MCF 10A (cell line): ENCODE measurements at regions of chr6 and their contacts with region 1.

Region 1: GRCh38 chr6:84707171-84707570 is 57.2 kb downstream of the TBX18 start:
- DNase-seq: no peak
- H3K4me3 Mint-ChIP-seq: no peak overlapping the region
- H3K27ac Mint-ChIP-seq: no peak overlapping the region
- H3K4me1 Mint-ChIP-seq: no peaks in the 10 kb centered on the region
- H3K27me3 Mint-ChIP-seq: no peaks in the 10 kb centered on the region
- CTCF ChIP-seq: no peak

Region 2: DNA sequence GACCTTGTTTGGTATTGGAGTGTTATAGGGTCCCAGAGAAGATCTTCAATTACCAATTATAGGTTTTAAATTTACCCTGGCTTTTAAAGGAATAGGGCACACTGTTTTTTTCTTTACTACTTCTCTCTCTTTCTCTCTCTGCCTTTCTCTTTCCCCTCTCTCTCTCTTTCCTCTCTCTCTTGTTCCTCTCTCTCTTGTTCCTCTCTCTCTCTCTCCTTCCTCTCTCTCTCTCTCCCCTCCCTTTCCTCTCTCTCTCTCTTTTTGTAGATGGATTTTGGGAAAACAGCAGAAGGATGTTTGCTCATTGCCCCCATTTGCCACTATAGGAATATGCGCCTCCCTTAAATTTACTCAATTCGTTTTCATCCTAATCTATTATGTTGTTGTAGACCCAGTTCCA is 12.0 kb after region 1 on chr6:
- CTCF ChIA-PET with region 1: no interaction called
- POLR2A ChIA-PET with region 1: no interaction called
- intact Hi-C with region 1: loop called (anchors 1 kb)
- DNase-seq: no peak
- H3K4me3 Mint-ChIP-seq: no peak overlapping the region
- H3K27ac Mint-ChIP-seq: no peak overlapping the region
- H3K4me1 Mint-ChIP-seq: peaks cover 11% of the 10 kb centered on the region
- H3K27me3 Mint-ChIP-seq: no peaks in the 10 kb centered on the region
- CTCF ChIP-seq: no peak